ENCODE measurements at regions of chr19 and their contacts with region 1.

Region 1: DNA sequence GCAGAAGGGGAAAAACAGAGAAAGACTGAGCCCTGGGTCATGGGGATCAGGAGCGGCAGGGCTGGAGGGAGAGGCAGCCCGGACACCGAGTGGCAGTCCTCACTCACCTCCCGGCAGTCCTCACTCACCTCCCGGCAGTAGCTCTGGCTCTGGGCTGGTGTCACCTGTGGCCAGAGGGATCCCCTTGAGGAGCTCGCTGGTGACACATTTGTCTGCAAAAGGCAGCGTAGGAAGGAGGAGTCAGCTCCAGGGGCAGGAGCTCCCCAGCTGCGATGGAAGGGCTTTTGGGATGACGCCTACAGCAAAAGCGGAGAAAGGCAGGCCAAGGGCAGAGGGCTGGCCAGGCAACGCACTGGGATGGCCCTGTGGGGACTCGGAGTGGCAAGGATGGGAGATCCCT is 739 bp downstream of the EIF3G start:
- DNase-seq: no peak
- ATAC-seq: no peak
- H3K4me3 ChIP-seq: peak overlapping the region; percentile 64 to 98 (median 90)
- H3K27ac ChIP-seq: peak overlapping the region in 8 of 12 donors; percentile 64 to 91 (median 82)
- H3K4me1 ChIP-seq: peaks cover 0 to 25% (median 11%) of the 10 kb centered on the region in 12 donors
- H3K27me3 ChIP-seq: no peaks in the 10 kb centered on the region
- CTCF ChIP-seq: no peak
- POLR2A ChIP-seq: no peak

Region 2: DNA sequence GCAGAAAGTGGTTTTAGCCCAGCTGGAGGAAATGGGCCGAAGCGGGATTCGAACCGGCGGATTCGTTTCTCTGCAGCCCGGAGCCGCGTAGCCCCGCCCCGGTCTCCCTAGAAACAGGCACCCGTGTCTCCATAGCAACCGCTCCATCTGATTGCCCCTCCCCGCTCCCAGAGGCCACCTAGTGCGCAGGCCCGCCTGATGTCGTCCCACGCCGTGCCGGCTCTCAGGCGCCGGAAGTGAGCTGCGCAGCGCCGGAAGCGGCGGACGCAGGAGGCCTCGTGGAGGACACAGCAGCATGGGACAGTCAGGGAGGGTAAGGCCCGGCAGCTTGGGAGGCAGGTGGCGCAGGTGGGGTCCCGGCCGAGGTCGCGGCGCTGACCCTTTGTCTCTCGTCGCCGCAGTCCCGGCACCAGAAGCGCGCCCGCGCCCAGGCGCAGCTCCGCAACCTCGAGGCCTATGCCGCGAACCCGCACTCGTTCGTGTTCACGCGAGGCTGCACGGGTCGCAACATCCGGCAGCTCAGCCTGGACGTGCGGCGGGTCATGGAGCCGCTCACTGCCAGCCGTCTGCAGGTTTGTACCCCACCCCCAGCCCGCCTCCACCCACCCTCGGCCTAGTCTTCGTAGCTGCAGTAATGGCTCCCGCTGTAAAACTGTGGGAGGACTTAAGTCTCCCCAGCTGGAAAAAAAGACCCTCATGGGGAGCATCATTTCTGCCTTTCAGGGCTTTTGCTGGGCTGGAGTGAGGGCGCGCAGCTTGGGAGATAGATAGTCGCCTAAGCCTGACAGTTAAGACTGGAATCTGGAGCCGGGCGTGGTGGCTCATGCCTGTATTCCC is 12.6 kb before region 1 on chr19 and contains the start of gene PPAN:
- intact Hi-C with region 1: loop called in 1 of 10 experiments (anchors 1 kb)
- DNase-seq: peak; percentile 98 to 99 (median 99)
- ATAC-seq: peak; percentile 98 to 100 (median 98)
- H3K4me3 ChIP-seq: peak within 1 kb of the TSS; percentile 56 to 96 (median 87)
- H3K27ac ChIP-seq: peak within 1 kb of the TSS; percentile 2 to 94 (median 79)
- H3K4me1 ChIP-seq: peaks cover 0 to 54% (median 13%) of the 10 kb centered on the region in 12 donors
- H3K27me3 ChIP-seq: no peaks in the 10 kb centered on the region
- CTCF ChIP-seq: no peak
- POLR2A ChIP-seq: peak in 1 of 2 donors; percentile 72
- total RNA-seq, gene PPAN: 16.3 to 24.9 (median 19.0) TPM